ENCODE measurements at regions of chr9 and their contacts with region 1.

Region 1: GRCh38 chr9:98056269-98057137 is at the start of gene NANS:
- DNase-seq: peak; percentile 94 to 96
- ATAC-seq: peak; percentile 96 to 99 (median 98)
- H3K4me3 ChIP-seq: peak within 1 kb of the TSS; percentile 76
- H3K27ac ChIP-seq: peak within 1 kb of the TSS; percentile 92
- H3K4me1 ChIP-seq: peaks cover 12% of the 10 kb centered on the region
- H3K27me3 ChIP-seq: no peaks in the 10 kb centered on the region
- CTCF ChIP-seq: no peak
- total RNA-seq, gene NANS: 21.1 to 53.8 (median 26.5) TPM

Region 2: GRCh38 chr9:98034593-98035546 is 21.6 kb before region 1 on chr9:
- intact Hi-C with region 1: loop called in 1 of 2 experiments (anchors 2 kb)
- DNase-seq: peak; percentile 79 to 88
- ATAC-seq: peak; percentile 53 to 76 (median 74)
- H3K4me3 ChIP-seq: peak overlapping the region; percentile 15
- H3K27ac ChIP-seq: peak overlapping the region; percentile 87
- H3K4me1 ChIP-seq: peaks cover 31% of the 10 kb centered on the region
- H3K27me3 ChIP-seq: no peaks in the 10 kb centered on the region
- CTCF ChIP-seq: peak; percentile 89

Region 3: GRCh38 chr9:98101868-98102273 is 45.4 kb after region 1 on chr9:
- intact Hi-C with region 1: no loop called
- DNase-seq: no peak
- ATAC-seq: no peak
- H3K4me3 ChIP-seq: no peak overlapping the region
- H3K27ac ChIP-seq: no peak overlapping the region
- H3K4me1 ChIP-seq: no peaks in the 10 kb centered on the region
- H3K27me3 ChIP-seq: no peaks in the 10 kb centered on the region
- CTCF ChIP-seq: no peak

Region 4: DNA sequence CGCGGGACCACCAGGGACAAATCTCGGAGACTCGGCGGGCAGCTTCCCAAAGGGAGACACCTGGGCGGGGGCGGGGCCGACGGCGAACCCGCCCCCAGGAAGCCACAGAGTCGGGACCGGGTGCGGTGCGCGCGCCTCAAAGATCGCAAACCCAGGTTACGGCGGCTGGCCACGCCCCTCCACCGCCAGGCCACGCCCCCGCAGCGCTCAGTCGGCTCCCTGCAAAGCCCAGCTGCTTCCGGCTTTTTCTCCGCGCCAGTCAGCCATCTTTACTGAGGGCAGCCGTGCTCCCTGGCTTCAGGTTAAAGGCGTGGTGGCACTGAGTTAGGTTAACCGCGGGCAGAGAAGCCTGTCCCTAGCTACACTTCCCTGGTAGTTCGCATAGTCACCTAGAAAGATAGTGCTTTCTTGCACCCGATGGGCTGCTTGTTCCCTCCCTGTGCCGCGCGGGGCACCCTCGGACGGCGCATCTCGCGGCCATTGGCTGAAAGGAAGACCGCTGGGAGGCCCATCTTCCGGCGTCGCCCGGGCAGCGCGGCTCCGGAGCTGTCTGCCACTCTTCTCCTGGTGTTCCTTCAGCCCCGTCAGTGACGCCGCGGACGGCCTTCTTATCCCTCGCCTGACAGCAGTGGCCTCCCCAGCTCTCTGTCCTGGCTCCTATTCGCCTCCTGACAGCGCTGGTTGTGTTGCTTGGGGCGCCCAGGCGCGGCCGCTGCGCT is 199.2 kb after region 1 on chr9 and contains the start of gene TBC1D2:
- intact Hi-C with region 1: loop called in 1 of 2 experiments (anchors 5 kb)
- DNase-seq: peak; percentile 94 to 98
- ATAC-seq: peak; percentile 97 to 99 (median 98)
- H3K4me3 ChIP-seq: peak within 1 kb of the TSS; percentile 93
- H3K27ac ChIP-seq: peak within 1 kb of the TSS; percentile 90
- H3K4me1 ChIP-seq: peaks cover 6% of the 10 kb centered on the region
- H3K27me3 ChIP-seq: no peaks in the 10 kb centered on the region
- CTCF ChIP-seq: no peak
- total RNA-seq, gene TBC1D2: 1.9 to 2.7 (median 2.4) TPM